Dendritic cell treated with granulocyte-macrophage colony-stimulating factor and Interleukin-4, amounts not matched to agents 40 ng/mL and 50 ng/mL, for 4 days (primary cell): ENCODE measurements at regions of chr3 and their contacts with region 1.

Region 1: GRCh38 chr3:132522353-132522752 is 74.7 kb upstream of the ACKR4 start:
- H3K4me3 Mint-ChIP-seq: no peak overlapping the region
- H3K27ac Mint-ChIP-seq: no peak overlapping the region
- H3K4me1 Mint-ChIP-seq: no peaks in the 10 kb centered on the region
- H3K27me3 Mint-ChIP-seq: no peaks in the 10 kb centered on the region

Region 2: GRCh38 chr3:132343018-132343612 is 179.2 kb before region 1 on chr3:
- intact Hi-C with region 1: no loop called
- H3K4me3 Mint-ChIP-seq: peak overlapping the region; percentile 60
- H3K27ac Mint-ChIP-seq: peak overlapping the region; percentile 71
- H3K4me1 Mint-ChIP-seq: peaks cover 20% of the 10 kb centered on the region
- H3K27me3 Mint-ChIP-seq: no peaks in the 10 kb centered on the region

Region 3: GRCh38 chr3:132464066-132464465 is 58.3 kb before region 1 on chr3:
- intact Hi-C with region 1: loop called (anchors 10 kb)
- H3K4me3 Mint-ChIP-seq: no peak overlapping the region
- H3K27ac Mint-ChIP-seq: no peak overlapping the region
- H3K4me1 Mint-ChIP-seq: no peaks in the 10 kb centered on the region
- H3K27me3 Mint-ChIP-seq: no peaks in the 10 kb centered on the region

Region 4: DNA sequence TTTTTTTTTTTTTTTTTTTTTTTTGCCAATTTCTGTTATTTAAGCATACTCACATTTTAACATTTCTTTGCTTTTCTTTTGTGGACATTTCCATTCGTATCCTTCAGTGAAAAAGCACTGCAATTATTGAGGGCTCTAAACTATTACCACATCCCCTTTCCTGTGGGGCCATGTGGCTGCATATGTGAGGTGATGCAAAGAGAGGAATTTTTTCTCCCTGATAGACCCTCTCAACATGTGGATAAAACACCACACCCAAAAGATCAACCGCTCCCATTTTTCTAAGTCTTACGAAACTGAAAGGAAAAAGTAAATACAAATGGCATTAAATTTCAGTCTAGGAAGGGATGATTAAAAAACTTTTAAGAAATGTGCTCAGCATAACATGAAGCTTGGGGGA is 36.3 kb before region 1 on chr3:
- intact Hi-C with region 1: loop called (anchors 5 kb)
- H3K4me3 Mint-ChIP-seq: no peak overlapping the region
- H3K27ac Mint-ChIP-seq: no peak overlapping the region
- H3K4me1 Mint-ChIP-seq: no peaks in the 10 kb centered on the region
- H3K27me3 Mint-ChIP-seq: no peaks in the 10 kb centered on the region

Region 5: GRCh38 chr3:133083395-133083794 is 561.0 kb after region 1 on chr3:
- intact Hi-C with region 1: no loop called
- H3K4me3 Mint-ChIP-seq: no peak overlapping the region
- H3K27ac Mint-ChIP-seq: no peak overlapping the region
- H3K4me1 Mint-ChIP-seq: no peaks in the 10 kb centered on the region
- H3K27me3 Mint-ChIP-seq: no peaks in the 10 kb centered on the region